ENCODE measurements at regions of chr7 and their contacts with region 1.

Region 1: DNA sequence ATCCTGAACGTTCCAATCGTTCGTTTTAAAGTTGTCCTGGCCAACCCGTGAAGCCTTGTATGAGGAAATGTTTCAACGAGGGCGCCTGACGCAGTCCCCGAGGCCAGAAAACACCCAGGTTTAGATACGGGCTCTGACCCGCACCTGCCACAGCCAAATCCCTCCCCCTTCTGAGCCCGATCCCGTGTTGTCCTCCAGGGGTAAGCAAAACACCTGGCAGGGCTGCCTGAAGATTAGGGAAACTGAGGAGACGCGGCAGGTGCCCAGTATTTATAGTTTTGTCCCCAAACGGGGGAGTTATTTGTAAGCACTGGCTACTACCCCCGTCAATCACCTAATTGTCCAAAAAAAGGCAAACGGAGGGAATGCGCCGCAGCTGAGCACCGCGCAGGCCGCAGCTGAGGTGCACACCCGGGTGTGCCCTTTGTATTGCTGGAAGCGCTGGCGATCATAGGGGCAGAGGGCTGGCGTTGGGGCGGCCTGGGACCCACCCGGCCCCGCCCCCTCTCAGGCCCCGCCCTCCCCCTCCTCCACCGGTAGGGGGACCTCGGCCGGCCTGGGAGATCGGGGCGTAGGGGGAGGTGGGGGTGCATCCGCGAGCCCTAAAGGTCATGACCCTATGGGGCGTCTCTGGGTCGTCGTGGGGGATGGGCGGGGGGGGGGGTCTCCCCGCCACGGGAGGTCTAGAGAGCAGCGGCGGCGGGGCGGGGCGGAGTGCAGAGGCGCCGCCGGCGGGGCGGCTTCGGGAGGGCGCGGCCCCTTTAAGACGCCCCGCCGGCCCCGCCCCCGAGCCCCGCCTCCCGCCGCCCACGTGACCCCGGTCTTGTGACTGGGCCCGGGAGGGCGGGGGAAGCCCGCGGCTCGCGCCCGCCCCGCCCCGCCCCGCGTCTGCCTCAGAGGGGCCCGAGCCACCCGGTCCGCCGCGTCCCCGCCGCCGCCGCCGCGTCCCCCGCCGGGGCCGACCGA is at the start of gene BRI3:
- DNase-seq: peak; percentile 97
- ATAC-seq: peak; percentile 84
- total RNA-seq, gene BRI3: 240 TPM

Region 2: DNA sequence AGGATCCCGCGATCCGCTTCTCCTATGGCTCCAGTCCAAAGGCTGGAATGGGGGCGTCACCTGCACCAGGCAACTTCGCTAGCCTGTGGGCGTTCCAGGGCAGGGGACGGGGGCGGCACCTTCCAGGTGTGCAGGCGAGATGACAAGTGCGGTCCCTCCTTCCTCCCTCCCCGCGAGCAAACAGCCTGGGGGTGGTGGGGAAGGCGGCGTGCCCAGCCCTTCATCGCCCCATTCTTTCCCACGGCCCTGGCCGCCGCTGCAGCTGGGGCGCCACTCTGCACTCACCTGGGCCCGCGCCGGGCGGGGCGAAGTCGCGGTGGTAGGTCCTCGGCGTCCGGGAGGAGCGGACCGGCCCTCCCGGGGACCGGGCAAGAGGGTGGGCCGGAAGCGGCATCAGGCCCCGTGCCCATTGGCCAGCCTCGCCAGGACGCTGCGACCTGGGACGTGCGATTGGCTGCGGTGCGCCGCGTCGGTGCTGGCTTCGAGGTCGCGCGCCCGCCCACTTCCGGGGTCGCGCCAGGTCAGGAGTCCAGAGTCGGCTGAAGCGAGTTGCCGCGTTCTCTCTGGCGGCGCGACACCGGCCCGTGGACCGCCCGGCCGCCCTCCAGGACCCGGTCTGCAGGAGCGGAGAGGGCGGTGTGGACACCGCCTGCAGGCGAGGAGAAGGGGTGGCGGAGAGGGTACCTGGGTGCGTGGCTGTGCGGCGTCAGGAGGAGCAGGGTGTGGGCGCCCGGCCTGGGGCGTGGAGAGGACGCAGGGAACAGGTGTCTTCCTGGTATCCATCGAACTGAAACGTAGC is 29.0 kb before region 1 on chr7 and contains the start of gene TECPR1:
- intact Hi-C with region 1: loop called (anchors 2 kb)
- DNase-seq: peak; percentile 98
- ATAC-seq: peak; percentile 100
- total RNA-seq, gene TECPR1: 20.9 TPM

Measured in Right ventricle myocardium inferior (tissue), 1 donor.